ENCODE measurements at regions of chr6 and their contacts with region 1.

Region 1: DNA sequence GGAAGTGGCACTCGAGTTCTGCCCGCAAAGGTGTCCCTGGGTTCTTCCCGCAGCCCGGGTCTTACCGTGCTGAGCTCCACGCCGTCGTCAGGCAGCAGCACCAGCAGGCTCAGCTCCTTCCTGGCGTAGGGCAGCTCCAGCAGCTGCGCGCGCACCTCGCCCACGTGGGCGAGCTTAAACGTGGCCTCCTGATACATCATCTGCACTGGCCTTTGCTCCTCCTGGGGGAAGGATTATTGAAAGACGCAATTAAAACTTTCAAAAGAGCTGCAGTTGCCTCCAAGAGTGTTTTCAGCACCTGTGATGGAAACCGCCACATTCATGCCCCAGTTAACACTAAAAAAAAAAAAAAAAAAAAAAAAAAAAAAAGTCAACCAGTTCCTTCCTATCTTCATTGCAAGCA is 11.3 kb downstream of the SERPINB9 start:
- DNase-seq: peak; percentile 85
- H3K4me3 Mint-ChIP-seq: peak overlapping the region; percentile 75
- H3K27ac Mint-ChIP-seq: peak overlapping the region; percentile 88
- H3K4me1 Mint-ChIP-seq: peaks cover 71% of the 10 kb centered on the region
- H3K27me3 Mint-ChIP-seq: no peaks in the 10 kb centered on the region

Region 2: GRCh38 chr6:2862712-2863181 is 29.0 kb before region 1 on chr6:
- CTCF ChIA-PET with region 1: interaction called, 11 read pairs
- intact Hi-C with region 1: loop called (anchors 1 kb)
- DNase-seq: peak; percentile 73
- H3K4me3 Mint-ChIP-seq: peak overlapping the region; percentile 66
- H3K27ac Mint-ChIP-seq: peak overlapping the region; percentile 96
- H3K4me1 Mint-ChIP-seq: peaks cover 66% of the 10 kb centered on the region
- H3K27me3 Mint-ChIP-seq: no peaks in the 10 kb centered on the region